Common myeloid progenitor, CD34-positive (primary cell): ENCODE measurements at regions of chr17 and their contacts with region 1.

Region 1: DNA sequence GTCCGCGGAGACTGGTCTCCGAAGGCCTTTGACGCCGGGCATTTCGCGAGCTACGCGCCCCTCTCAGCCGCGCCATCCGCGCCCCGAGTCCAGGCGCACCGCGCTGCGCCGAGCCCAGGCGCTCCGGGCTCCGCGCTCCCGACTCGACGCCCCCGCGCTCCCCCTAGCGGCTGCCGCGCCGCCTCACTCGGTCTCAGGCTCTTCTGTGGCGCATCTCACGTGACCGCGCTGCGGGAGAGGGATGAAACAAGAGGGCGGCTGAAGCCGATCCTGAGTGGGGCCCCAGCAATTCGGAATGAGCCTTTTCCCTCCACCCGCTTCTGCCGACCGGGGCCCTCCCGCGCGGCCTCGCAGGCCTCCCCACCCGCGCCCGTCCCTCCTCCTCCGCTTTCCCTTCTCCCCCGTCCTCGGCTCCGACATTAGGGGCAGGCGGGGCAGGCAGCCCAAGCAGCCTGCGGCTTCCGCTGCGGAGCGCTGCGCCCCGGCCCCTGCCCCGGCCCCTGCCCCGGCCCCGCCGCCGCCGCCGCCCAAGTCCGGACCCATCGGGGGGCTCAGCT is 42.5 kb upstream of the AMZ2 start:
- DNase-seq: peak; percentile 87 to 90 (median 90)
- H3K4me3 ChIP-seq: peak overlapping the region; percentile 62 to 91 (median 74)
- H3K27ac ChIP-seq: peak overlapping the region in 1 of 2 experiments; percentile 25
- H3K4me1 ChIP-seq: peaks cover 4 to 31% (median 21%) of the 10 kb centered on the region in 4 experiments
- H3K27me3 ChIP-seq: peaks cover 0 to 8% (median 0%) of the 10 kb centered on the region in 5 experiments

Region 2: GRCh38 chr17:68184816-68185436 is 20.4 kb before region 1 on chr17:
- CTCF ChIA-PET with region 1: interaction called, 25 read pairs
- POLR2A ChIA-PET with region 1: interaction called, 3 read pairs
- DNase-seq: peak in 2 of 3 donors; percentile 53 to 57
- H3K4me3 ChIP-seq: no peak overlapping the region
- H3K27ac ChIP-seq: no peak overlapping the region
- H3K4me1 ChIP-seq: peaks cover 8 to 43% (median 38%) of the 10 kb centered on the region in 4 experiments
- H3K27me3 ChIP-seq: no peaks in the 10 kb centered on the region